ENCODE measurements at regions of chr1 and their contacts with region 1.

Region 1: DNA sequence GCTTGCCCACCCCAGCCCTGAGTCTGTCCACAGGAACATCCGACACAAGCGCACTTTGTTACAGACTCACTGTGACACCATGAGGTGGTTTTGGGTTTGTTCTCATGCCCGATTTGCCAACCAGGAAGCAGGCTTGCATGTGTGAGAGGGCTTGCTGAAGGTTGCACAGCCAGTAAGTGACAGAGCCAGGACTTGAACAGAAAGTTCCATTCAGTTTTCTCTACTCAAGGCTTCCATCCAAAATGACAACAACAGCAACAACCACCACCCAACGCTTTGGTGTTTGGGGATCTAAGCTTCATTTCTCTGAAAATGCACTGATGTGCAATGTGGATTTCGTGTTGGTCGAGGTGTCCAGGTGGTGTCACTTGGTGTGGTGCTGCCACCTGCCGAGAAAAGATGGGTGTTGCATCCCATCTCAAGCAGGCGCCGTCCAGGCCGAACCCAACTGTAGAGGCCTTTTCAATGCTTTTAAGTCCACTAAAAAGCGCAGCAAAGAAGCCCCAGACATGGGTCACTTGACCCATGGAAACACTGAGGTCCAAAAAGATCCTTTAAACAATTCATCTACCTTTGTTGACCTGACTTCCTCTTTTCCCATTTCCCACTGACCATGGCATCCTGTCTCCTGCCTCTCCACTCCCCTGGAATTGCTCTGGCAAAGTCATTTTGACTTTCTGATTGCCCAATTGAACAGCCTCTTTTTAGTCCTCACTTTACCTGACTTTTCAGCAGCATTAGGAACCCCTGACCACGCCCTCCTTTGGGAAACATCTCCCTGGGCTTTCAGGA is 12.2 kb downstream of the CITED4 start:
- DNase-seq: peak; percentile 81
- ATAC-seq: peak; percentile 89 to 91
- H3K4me3 ChIP-seq: no peak overlapping the region
- H3K27ac ChIP-seq: no peak overlapping the region
- H3K4me1 ChIP-seq: peaks cover 6% of the 10 kb centered on the region
- H3K27me3 ChIP-seq: no peaks in the 10 kb centered on the region
- CTCF ChIP-seq: peak; percentile 91

Region 2: GRCh38 chr1:40618108-40618507 is 231.9 kb before region 1 on chr1:
- intact Hi-C with region 1: loop called (anchors 5 kb)
- DNase-seq: no peak
- ATAC-seq: no peak
- H3K4me3 ChIP-seq: no peak overlapping the region
- H3K27ac ChIP-seq: no peak overlapping the region
- H3K4me1 ChIP-seq: no peaks in the 10 kb centered on the region
- H3K27me3 ChIP-seq: no peaks in the 10 kb centered on the region
- CTCF ChIP-seq: no peak

Region 3: DNA sequence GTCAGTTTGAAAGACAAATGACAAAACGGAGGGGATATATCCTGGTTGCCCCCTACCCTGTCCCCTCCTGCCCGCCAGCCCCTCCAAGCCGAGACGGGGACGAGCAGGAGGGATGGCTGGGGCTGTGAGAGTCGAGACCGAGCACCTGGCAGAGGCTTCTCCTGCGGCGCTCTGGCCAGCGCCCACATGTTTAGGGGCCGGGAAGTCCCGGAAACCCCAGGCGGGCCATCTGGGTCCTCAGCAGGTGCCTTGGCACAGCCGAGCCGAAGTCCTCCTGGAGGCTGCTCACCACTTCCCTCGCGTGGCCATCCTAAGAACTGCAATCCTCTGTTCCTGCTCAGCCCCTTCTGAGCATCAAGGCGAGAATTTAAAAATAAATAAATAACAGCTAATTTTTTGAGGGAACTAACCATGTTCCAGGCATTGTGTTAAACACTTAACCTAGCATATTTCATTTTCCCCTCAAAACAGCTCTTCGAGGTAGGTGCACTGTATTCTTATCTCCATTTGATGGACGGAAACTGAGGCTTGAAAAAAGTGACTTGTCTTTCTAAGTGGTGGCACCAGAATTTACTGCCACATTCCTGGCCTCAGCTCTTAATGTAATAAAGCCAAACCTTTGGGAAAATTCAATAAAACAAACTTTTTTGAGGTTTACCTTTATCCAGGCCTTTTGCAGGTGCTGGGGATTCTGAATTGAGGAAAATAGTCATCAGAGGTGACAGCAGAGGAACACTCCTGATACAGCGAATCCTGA is 181.1 kb before region 1 on chr1:
- intact Hi-C with region 1: no loop called
- DNase-seq: peak; percentile 85
- ATAC-seq: peak; percentile 78 to 85
- H3K4me3 ChIP-seq: peak overlapping the region; percentile 12
- H3K27ac ChIP-seq: no peak overlapping the region
- H3K4me1 ChIP-seq: peaks cover 16% of the 10 kb centered on the region
- H3K27me3 ChIP-seq: no peaks in the 10 kb centered on the region
- CTCF ChIP-seq: peak; percentile 98

Region 4: GRCh38 chr1:40951943-40952743 is 102.1 kb after region 1 on chr1:
- intact Hi-C with region 1: loop called (anchors 10 kb)
- DNase-seq: peak; percentile 83
- ATAC-seq: peak; percentile 83 to 87
- H3K4me3 ChIP-seq: no peak overlapping the region
- H3K27ac ChIP-seq: no peak overlapping the region
- H3K4me1 ChIP-seq: peaks cover 7% of the 10 kb centered on the region
- H3K27me3 ChIP-seq: peaks cover 5% of the 10 kb centered on the region
- CTCF ChIP-seq: peak; percentile 92